PC-3 (cell line): ENCODE measurements at regions of chr22 and their contacts with region 1.

Region 1: DNA sequence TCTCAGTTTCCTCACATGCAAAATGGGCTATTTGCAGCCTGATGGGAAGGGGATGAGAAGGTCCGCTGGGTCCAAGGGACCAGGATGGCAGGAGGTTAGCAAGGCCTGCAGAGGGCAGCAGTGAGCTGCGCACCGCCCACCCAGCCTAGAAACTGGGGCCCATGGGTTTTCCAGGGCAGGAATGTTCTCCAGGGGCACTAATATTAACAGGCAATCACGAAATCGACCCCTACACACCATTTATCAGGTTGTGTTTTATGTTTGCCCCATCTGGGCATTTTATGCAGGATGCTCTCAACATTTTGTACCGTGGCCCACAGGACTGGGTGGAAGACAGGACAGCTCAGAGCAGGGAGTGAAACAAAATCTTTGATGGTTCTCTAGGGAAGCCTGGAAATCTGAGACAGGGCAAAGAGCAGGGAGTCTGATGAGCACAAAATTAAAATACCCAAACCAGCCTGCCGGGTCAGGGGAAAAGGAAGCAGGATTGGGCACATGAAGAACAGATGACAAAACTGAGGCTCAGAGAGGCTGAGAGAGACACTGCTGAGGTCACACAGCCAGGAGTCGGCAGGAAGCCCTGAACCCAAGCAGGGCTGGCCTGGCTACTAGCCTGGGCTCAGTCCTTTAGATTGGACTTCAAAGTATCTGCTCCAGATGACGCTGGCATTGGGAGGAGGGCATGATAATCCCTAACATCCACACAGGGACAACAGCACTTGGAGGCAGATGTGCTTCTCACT is 1.6 kb upstream of the BCR start:
- DNase-seq: peak; percentile 68
- ATAC-seq: peak; percentile 26
- H3K4me3 ChIP-seq: no peak overlapping the region
- H3K27ac ChIP-seq: no peak overlapping the region
- H3K4me1 ChIP-seq: peaks cover 28% of the 10 kb centered on the region
- H3K27me3 ChIP-seq: no peaks in the 10 kb centered on the region
- CTCF ChIP-seq: peak; percentile 85

Region 2: GRCh38 chr22:23163665-23164064 is 15.0 kb before region 1 on chr22:
- CTCF ChIA-PET with region 1: no interaction called
- POLR2A ChIA-PET with region 1: no interaction called
- intact Hi-C with region 1: no loop called
- DNase-seq: no peak
- ATAC-seq: no peak
- H3K4me3 ChIP-seq: no peak overlapping the region
- H3K27ac ChIP-seq: no peak overlapping the region
- H3K4me1 ChIP-seq: no peaks in the 10 kb centered on the region
- H3K27me3 ChIP-seq: no peaks in the 10 kb centered on the region
- CTCF ChIP-seq: no peak

Region 3: GRCh38 chr22:23225724-23226496 is 47.2 kb after region 1 on chr22:
- CTCF ChIA-PET with region 1: no interaction called
- POLR2A ChIA-PET with region 1: interaction called, 4 read pairs
- intact Hi-C with region 1: loop called (anchors 2 kb)
- DNase-seq: peak; percentile 82
- ATAC-seq: peak; percentile 95
- H3K4me3 ChIP-seq: peak overlapping the region; percentile 33
- H3K27ac ChIP-seq: peak overlapping the region; percentile 95
- H3K4me1 ChIP-seq: peaks cover 35% of the 10 kb centered on the region
- H3K27me3 ChIP-seq: no peaks in the 10 kb centered on the region
- CTCF ChIP-seq: no peak

Region 4: DNA sequence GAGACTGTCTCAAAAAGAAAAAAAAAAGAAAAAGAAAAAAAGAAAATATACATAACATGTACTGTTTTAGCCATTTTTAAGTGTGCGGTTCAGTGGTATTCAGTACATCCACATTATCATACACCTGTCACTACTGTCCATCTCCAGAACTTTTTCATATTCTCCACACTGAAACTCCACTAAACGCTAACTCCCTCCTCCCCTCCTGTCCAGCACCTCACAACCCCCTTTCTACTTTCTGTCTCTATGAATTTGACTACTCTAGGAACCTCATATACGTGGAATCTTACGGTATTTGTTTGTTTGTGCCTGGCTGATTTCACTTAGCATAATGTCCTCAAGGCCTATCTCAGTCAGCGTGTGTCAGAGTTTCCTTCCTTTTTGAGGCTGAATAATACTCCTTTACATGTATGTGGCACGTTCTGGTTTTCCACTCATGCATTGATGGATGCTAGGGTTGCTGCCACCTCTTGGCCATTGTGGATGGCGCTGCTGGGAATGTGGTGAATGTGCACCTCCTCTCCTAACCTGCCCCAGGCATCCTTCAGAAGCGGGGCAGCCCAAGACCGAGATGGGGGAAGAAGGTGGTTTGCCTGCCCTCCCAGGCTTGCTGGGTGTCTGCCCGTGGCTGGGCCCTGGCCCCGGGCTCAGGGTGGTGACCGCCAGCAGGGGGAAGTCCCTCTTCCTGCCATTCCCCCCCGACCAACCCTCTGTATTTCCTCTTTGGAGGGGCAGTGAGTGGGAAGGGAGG is 62.1 kb after region 1 on chr22:
- CTCF ChIA-PET with region 1: no interaction called
- POLR2A ChIA-PET with region 1: no interaction called
- intact Hi-C with region 1: loop called (anchors 1 kb)
- DNase-seq: peak; percentile 44
- ATAC-seq: peak; percentile 76
- H3K4me3 ChIP-seq: no peak overlapping the region
- H3K27ac ChIP-seq: no peak overlapping the region
- H3K4me1 ChIP-seq: no peaks in the 10 kb centered on the region
- H3K27me3 ChIP-seq: no peaks in the 10 kb centered on the region
- CTCF ChIP-seq: peak; percentile 65

Region 5: GRCh38 chr22:23281406-23282088 is 102.9 kb after region 1 on chr22:
- CTCF ChIA-PET with region 1: interaction called, 25 read pairs
- POLR2A ChIA-PET with region 1: interaction called, 10 read pairs
- intact Hi-C with region 1: loop called (anchors 1 kb)
- DNase-seq: peak; percentile 76
- ATAC-seq: peak; percentile 70
- H3K4me3 ChIP-seq: peak overlapping the region; percentile 54; the same call in 1 of the 2 replicates
- H3K27ac ChIP-seq: peak overlapping the region; percentile 81
- H3K4me1 ChIP-seq: peaks cover 22% of the 10 kb centered on the region
- H3K27me3 ChIP-seq: no peaks in the 10 kb centered on the region
- CTCF ChIP-seq: peak; percentile 82

Region 6: DNA sequence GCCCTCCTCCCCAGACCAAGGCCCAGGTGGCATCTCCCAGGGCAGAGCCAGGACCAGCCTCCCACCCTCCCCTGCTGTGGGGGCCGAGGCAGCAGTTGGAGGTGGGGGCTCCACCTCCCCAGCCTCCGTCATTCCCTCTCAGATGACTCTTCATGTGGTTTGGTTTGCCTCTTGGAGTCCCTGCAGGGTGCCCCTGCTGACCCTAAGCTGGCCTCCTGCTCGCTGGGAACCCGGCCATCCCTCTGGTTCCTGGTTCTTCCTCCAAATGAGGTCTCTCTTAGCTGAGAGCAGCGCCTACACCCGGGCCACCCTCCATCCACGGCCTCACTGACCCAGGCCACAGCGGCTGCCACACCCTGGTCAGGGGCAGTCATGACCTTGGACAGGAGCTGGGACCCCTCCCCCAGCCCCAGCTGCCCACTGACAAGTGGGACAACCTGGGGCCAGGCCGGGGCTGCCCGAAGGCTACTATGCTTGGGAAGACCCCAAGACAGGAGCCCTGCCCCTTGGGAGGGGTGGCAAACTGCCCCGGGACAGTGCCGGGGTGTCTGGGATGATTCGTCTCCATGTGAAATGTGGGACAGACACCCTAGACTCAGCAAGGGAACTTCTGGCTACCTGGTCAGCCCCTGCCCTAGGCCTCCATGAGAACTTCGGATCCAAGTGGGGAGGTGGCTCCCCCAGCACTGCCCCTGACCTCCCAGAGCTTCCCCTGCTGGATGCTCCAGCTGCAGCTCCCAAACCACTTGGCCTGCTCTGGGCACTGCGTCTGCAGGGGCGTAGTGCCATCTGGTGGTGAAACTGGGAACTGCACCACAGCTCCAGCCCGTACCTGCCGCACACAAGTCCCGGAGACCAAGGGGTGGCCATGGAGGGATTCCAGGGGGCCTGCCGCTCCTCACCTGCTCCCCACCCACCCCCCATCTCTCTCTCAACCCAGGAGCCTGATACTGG is 206.9 kb after region 1 on chr22:
- CTCF ChIA-PET with region 1: interaction called, 10 read pairs
- POLR2A ChIA-PET with region 1: no interaction called
- intact Hi-C with region 1: no loop called
- DNase-seq: peak; percentile 80
- ATAC-seq: peak; percentile 94
- H3K4me3 ChIP-seq: no peak overlapping the region
- H3K27ac ChIP-seq: no peak overlapping the region
- H3K4me1 ChIP-seq: no peaks in the 10 kb centered on the region
- H3K27me3 ChIP-seq: no peaks in the 10 kb centered on the region
- CTCF ChIP-seq: peak; percentile 82